ENCODE measurements at regions of chr7 and their contacts with region 1.

Region 1: GRCh38 chr7:12686894-12687717 is at the start of gene ARL4A:
- DNase-seq: peak; percentile 95
- H3K4me3 Mint-ChIP-seq: peak within 1 kb of the TSS; percentile 91
- H3K27ac Mint-ChIP-seq: peak within 1 kb of the TSS; percentile 92
- H3K4me1 Mint-ChIP-seq: peaks cover 25% of the 10 kb centered on the region
- H3K27me3 Mint-ChIP-seq: no peaks in the 10 kb centered on the region
- total RNA-seq, gene ARL4A: 11.3 to 12.7 TPM

Region 2: GRCh38 chr7:12211054-12211710 is 475.9 kb before region 1 on chr7 and contains the start of gene TMEM106B:
- CTCF ChIA-PET with region 1: no interaction called
- POLR2A ChIA-PET with region 1: no interaction called
- intact Hi-C with region 1: loop called (anchors 1 kb)
- DNase-seq: peak; percentile 98
- H3K4me3 Mint-ChIP-seq: peak within 1 kb of the TSS; percentile 97
- H3K27ac Mint-ChIP-seq: peak within 1 kb of the TSS; percentile 91
- H3K4me1 Mint-ChIP-seq: peaks cover 28% of the 10 kb centered on the region
- H3K27me3 Mint-ChIP-seq: no peaks in the 10 kb centered on the region
- total RNA-seq, gene TMEM106B: 25.5 to 26.2 TPM

Region 3: DNA sequence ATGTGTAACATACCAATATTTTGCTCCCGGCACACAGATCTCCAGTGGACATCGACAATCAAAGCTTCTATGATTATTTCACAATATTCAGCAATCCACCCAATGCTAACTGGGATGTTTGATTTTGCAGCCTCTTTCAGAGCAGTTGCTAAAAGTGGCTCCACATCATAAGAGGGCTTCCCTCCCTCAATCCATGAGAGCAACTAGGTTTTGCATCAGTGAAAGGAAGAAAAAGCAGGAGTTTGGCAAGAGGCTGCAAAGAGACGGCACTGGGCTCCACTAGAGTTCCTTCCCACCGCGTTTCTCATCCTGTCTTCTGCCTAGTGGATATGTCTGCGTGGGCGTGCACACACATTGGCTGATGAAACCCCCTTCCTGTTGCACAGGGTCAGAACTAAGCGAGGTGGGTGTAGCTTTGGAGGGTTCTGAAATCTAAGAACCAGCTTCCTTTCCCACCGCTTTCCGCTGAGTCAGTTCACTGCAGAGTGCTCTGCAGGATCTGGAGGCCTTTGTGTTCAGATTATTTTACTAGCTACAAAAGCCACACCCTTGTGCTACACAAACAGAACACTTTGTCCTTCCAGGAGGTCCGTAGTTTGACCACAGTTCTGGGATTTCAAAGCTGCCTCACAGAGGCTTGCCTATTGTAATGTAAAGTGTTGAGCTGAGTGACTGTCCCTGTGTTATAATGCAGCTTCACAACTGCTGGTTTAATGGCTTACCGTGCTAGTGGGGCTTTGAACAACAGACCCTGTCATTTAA is 28.4 kb after region 1 on chr7:
- CTCF ChIA-PET with region 1: interaction called, 12 read pairs
- POLR2A ChIA-PET with region 1: interaction called, 3 read pairs
- intact Hi-C with region 1: loop called (anchors 1 kb)
- DNase-seq: peak; percentile 53
- H3K4me3 Mint-ChIP-seq: no peak overlapping the region
- H3K27ac Mint-ChIP-seq: no peak overlapping the region
- H3K4me1 Mint-ChIP-seq: peaks cover 22% of the 10 kb centered on the region
- H3K27me3 Mint-ChIP-seq: no peaks in the 10 kb centered on the region

Region 4: DNA sequence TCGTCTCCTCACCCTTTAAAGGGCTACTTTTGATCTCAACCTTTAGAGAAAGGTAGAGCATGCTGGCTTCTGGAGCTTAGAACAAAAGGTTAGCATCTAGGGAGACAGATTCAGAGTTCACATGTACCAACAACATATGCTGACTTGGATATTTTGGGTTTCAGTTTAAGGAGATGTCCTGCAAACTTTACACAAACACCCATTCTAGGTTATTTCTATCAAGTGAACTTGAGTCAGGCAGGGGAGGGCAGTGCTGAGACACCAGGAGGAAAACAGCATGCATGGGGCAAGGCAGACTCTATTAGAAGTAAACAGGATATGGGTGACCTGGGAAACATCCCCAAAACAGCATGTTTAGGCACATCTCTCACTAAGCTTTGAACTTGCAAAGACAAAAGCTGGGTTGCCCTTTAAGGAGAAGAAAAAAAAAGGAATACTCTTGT is 44.1 kb after region 1 on chr7:
- CTCF ChIA-PET with region 1: interaction called, 6 read pairs
- POLR2A ChIA-PET with region 1: interaction called, 3 read pairs
- intact Hi-C with region 1: loop called (anchors 2 kb)
- DNase-seq: peak; percentile 14
- H3K4me3 Mint-ChIP-seq: no peak overlapping the region
- H3K27ac Mint-ChIP-seq: peak overlapping the region; percentile 46
- H3K4me1 Mint-ChIP-seq: peaks cover 24% of the 10 kb centered on the region
- H3K27me3 Mint-ChIP-seq: no peaks in the 10 kb centered on the region

Region 5: GRCh38 chr7:12802098-12802497 is 115.0 kb after region 1 on chr7:
- CTCF ChIA-PET with region 1: no interaction called
- POLR2A ChIA-PET with region 1: no interaction called
- intact Hi-C with region 1: no loop called
- DNase-seq: no peak
- H3K4me3 Mint-ChIP-seq: no peak overlapping the region
- H3K27ac Mint-ChIP-seq: no peak overlapping the region
- H3K4me1 Mint-ChIP-seq: no peaks in the 10 kb centered on the region
- H3K27me3 Mint-ChIP-seq: no peaks in the 10 kb centered on the region

Region 6: DNA sequence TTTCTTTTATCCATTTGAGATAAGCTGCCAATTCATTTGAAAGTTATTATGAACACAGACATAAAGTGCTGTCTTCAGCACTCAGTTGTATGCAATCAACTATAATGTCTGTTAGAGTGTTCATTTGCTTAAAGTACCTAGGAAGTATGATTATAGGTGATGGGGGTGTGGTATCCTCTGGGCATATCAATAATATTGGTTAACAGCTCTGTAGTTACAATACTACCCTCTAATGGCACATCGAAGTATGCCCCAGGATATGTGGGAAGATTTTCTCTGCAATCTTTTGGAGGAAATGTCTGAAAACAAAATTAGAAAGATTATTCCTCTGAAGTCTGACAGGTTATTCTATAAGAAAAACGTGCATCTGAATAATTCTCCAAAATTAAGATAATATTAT is 430.0 kb after region 1 on chr7:
- CTCF ChIA-PET with region 1: no interaction called
- POLR2A ChIA-PET with region 1: no interaction called
- intact Hi-C with region 1: loop called (anchors 2 kb)
- DNase-seq: no peak
- H3K4me3 Mint-ChIP-seq: no peak overlapping the region
- H3K27ac Mint-ChIP-seq: no peak overlapping the region
- H3K4me1 Mint-ChIP-seq: no peaks in the 10 kb centered on the region
- H3K27me3 Mint-ChIP-seq: peaks cover 4% of the 10 kb centered on the region

Region 7: GRCh38 chr7:13262929-13263530 is 575.9 kb after region 1 on chr7:
- CTCF ChIA-PET with region 1: interaction called, 17 read pairs
- POLR2A ChIA-PET with region 1: no interaction called
- intact Hi-C with region 1: no loop called
- DNase-seq: no peak
- H3K4me3 Mint-ChIP-seq: no peak overlapping the region
- H3K27ac Mint-ChIP-seq: no peak overlapping the region
- H3K4me1 Mint-ChIP-seq: no peaks in the 10 kb centered on the region
- H3K27me3 Mint-ChIP-seq: peaks cover 2% of the 10 kb centered on the region

Measured in activated CD4-positive, alpha-beta memory T cell treated with anti-CD3 and anti-CD28 coated beads for 36 hours (primary cell).